PC-3 (cell line): ENCODE measurements at regions of chr6 and their contacts with region 1.

Region 1: DNA sequence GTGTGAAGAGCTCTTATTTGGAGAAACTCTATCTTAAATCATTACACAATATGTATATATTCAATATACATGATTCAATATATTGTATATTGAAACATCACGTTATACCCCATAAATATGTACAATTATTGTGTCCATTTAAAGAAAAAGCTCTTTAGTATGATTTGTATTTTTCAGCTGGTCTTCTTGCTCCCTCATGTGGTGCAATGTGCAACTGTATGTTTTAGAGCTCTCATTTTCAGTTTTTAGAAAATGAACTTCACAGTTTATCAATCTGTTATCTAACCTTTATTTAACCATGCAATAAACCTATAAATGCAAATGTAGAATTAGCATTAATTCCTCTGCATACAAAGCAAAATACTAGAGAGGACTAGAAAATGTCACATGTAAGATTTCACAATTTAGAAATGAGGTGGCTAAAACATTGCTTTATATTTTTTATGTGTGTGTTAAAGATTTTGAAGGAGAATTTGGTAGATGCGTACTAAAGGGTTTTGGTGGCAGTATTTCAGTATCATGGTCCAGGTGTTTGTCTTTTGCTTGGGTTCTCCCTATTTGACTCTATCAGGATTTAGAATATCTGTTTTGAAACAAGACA is 167.1 kb downstream of the PHF3 start:
- DNase-seq: peak; percentile 51
- ATAC-seq: no peak
- H3K4me3 ChIP-seq: no peak overlapping the region
- H3K27ac ChIP-seq: peak overlapping the region; percentile 100
- H3K4me1 ChIP-seq: peaks cover 43% of the 10 kb centered on the region
- H3K27me3 ChIP-seq: no peaks in the 10 kb centered on the region
- CTCF ChIP-seq: peak; percentile 74

Region 2: DNA sequence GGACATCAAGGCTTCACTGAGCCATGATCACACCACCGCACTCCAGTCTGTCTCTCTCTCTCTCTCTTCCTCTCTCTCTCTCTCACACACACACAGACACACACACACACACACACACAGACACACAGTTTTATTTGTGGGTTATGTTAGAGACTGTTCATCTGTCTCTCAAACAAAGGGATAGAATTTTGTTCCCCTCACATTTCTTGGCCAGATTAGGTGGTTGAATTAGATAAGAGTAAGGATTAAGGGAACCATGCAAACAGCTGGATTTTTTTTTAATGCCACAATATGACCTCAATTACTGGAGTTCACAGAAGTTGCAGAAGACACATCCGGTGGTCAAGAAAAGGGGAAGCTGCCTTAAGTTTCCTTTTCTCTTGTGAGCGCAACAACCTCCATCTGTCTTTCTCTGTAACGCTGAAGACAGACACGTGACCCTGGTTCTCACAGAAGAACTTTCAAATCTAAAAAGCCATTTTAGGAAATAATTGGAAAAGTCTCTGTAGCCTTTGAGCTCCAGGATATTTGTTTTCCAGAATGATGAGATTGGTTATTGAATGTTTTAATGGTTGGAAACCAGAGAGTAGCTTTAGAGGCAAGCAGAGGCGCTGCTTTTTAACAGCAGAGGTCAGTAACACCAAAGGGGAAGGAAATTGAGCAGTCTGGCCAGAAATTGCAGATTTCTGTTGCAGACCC is 450.0 kb before region 1 on chr6:
- CTCF ChIA-PET with region 1: interaction called, 10 read pairs
- POLR2A ChIA-PET with region 1: no interaction called
- intact Hi-C with region 1: loop called (anchors 1 kb)
- DNase-seq: peak; percentile 57
- ATAC-seq: peak; percentile 85
- H3K4me3 ChIP-seq: no peak overlapping the region
- H3K27ac ChIP-seq: no peak overlapping the region
- H3K4me1 ChIP-seq: peaks cover 23% of the 10 kb centered on the region
- H3K27me3 ChIP-seq: no peaks in the 10 kb centered on the region
- CTCF ChIP-seq: peak; percentile 69

Region 3: DNA sequence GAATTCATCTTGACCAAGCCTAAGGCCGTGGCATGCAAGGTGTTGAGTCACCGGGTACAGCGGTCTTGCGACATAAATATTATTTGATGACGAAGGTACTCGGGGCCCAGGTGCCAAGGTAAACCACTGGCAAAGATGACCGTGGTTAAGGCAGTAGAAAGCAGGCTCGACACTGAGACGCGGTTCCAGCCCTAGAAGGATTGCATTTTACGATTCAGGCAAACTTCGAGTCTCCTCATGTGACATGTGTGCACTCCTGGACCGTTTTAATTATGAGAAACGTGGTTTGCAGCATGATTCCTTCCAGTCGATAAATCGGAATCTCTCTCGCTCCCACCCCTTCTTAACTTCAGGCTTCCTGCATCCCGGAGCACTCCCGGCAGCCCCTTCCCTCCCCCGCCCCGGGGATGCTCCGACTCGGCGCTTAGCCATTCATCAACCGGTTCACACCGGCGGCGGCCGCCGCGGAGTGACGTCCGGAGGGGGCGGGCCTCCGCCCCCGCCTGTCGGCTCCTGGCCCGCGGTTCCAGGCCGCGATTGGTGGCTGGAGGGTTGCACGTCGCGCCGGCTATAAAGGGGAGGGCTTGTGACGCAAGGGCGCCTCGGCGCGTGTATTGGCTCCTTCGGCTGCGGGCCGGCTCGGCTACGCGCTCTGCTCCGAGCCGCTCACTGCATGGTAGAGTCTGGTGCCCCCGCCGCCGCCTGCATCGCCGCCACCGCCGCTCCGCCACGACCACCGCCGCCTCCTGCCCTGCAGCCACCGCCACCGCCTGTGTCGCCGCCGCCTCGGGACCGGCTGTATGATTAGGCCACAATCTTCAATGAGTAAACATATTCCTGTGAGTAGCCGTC is 230.6 kb before region 1 on chr6 and contains the starts of genes LOC128125822 and PTP4A1:
- CTCF ChIA-PET with region 1: no interaction called
- POLR2A ChIA-PET with region 1: no interaction called
- intact Hi-C with region 1: loop called (anchors 2 kb)
- DNase-seq: peak; percentile 93
- ATAC-seq: peak; percentile 86
- H3K4me3 ChIP-seq: peak within 1 kb of the TSS; percentile 84
- H3K27ac ChIP-seq: peak within 1 kb of the TSS; percentile 99
- H3K4me1 ChIP-seq: peaks cover 18% of the 10 kb centered on the region
- H3K27me3 ChIP-seq: no peaks in the 10 kb centered on the region
- CTCF ChIP-seq: no peak
- total RNA-seq, gene PTP4A1: 29.9 and 45.7 TPM in 2 replicates

Region 4: GRCh38 chr6:63764318-63764916 is 38.3 kb before region 1 on chr6:
- CTCF ChIA-PET with region 1: interaction called, 7 read pairs
- POLR2A ChIA-PET with region 1: no interaction called
- intact Hi-C with region 1: loop called (anchors 5 kb)
- DNase-seq: peak; percentile 74
- ATAC-seq: no peak
- H3K4me3 ChIP-seq: no peak overlapping the region
- H3K27ac ChIP-seq: no peak overlapping the region
- H3K4me1 ChIP-seq: no peaks in the 10 kb centered on the region; the same call in 1 of the 2 replicates
- H3K27me3 ChIP-seq: no peaks in the 10 kb centered on the region
- CTCF ChIP-seq: peak; percentile 53

Region 5: DNA sequence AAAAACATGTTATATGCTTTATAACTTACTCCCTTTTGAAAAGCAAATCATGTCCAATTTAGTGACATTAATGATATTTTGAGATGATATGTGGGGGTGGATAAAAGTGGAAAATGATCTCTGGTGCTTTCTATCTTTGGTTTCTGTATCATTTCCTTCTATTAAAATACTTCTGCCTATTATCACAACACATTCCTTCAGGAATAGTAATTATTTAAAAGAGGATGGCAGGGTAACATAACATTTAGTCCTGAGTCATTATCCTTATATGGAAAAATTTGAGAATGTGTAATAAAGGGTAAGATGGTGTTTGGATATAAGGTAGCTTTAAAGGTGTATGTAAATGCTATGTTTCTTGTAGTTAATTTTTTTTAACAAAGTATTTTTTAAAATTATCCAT is 490.6 kb after region 1 on chr6:
- CTCF ChIA-PET with region 1: no interaction called
- POLR2A ChIA-PET with region 1: no interaction called
- intact Hi-C with region 1: loop called (anchors 5 kb)
- DNase-seq: peak; percentile 68
- ATAC-seq: peak; percentile 54
- H3K4me3 ChIP-seq: peak overlapping the region; percentile 52
- H3K27ac ChIP-seq: peak overlapping the region; percentile 87
- H3K4me1 ChIP-seq: peaks cover 52% of the 10 kb centered on the region
- H3K27me3 ChIP-seq: no peaks in the 10 kb centered on the region
- CTCF ChIP-seq: no peak